Mammary epithelial cell (primary cell): ENCODE measurements at regions of chr15 and their contacts with region 1.

Region 1: GRCh38 chr15:69719527-69720240 is 267.1 kb downstream of the RPLP1 start:
- DNase-seq: no peak
- H3K4me3 ChIP-seq: no peak overlapping the region
- H3K27ac ChIP-seq: no peak overlapping the region
- H3K4me1 ChIP-seq: peaks cover 8% of the 10 kb centered on the region
- H3K27me3 ChIP-seq: peaks cover 11% of the 10 kb centered on the region
- CTCF ChIP-seq: no peak

Region 2: DNA sequence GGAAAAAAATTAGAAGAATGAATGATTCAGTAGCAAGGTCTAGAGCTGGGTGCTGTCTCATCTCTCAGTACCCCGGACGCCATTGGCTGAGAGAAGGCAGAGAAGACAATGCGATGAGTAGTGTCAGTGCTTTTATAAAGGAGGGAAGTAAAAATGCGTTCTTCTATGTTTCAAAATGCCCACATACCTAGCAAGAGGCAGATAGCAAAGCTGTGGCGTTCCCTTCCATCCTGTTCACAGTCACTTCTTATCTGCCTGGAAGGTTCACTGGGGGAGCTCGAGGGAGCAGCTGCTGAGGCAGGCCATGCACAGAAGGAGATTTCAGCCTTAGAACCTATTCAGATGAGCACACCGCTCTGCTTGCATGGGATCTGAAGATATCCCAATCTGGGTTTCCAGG is 33.1 kb before region 1 on chr15:
- CTCF ChIA-PET with region 1: no interaction called
- dilution Hi-C with region 1: no loop called
- in situ Hi-C with region 1: no loop called
- intact Hi-C with region 1: no loop called
- DNase-seq: no peak
- H3K4me3 ChIP-seq: no peak overlapping the region
- H3K27ac ChIP-seq: no peak overlapping the region
- H3K4me1 ChIP-seq: no peaks in the 10 kb centered on the region
- H3K27me3 ChIP-seq: no peaks in the 10 kb centered on the region
- CTCF ChIP-seq: no peak

Region 3: DNA sequence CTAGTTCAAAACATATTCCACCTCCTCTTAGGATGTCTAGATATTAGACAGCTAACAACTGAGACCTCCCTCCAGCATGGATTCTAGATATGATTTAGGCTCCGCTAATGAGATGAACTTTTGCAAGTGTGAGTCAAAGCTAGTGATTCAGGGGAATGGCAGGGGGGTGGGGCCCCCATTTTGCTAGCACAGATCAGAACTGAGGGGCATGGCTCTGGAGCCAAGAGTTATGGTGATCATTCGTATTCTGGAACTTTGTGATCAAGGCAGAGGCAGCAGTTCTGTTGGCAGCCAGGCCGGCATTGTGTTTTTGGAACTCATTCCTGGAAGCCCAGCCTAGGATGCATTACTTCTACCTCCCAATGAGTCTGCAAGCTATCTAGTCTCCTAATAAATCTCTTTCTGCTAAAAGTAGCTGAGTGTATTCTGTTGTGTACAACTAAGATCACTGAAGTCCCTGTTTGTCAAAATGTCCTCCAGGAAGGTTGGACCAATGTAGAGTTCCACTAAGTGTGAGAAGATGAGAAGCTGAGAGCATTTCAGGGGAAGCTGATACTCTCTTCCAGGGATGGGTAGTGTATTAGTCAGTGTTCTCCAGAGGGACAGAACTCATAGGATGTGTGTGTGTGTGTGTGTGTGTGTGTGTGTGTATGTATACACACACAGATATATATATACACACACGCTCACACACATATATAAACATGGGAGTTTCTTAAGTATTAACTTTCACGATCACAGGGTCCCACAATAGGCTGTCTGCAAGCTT is 65.3 kb after region 1 on chr15:
- CTCF ChIA-PET with region 1: no interaction called
- dilution Hi-C with region 1: loop called (anchors 5 kb)
- in situ Hi-C with region 1: no loop called
- intact Hi-C with region 1: no loop called
- DNase-seq: no peak
- H3K4me3 ChIP-seq: no peak overlapping the region
- H3K27ac ChIP-seq: no peak overlapping the region
- H3K4me1 ChIP-seq: no peaks in the 10 kb centered on the region
- H3K27me3 ChIP-seq: peaks cover 3% of the 10 kb centered on the region
- CTCF ChIP-seq: no peak